ENCODE measurements at regions of chr1 and their contacts with region 1.

Region 1: GRCh38 chr1:165597883-165598675 is 33.0 kb upstream of the MGST3 start:
- DNase-seq: peak; percentile 92 to 99 (median 97)
- H3K4me3 ChIP-seq: peak overlapping the region in 2 of 4 donors; percentile 38 to 66
- H3K27ac ChIP-seq: peak overlapping the region in 3 of 5 donors; percentile 45 to 74 (median 58)
- H3K4me1 ChIP-seq: peaks cover 12 to 13% of the 10 kb centered on the region in 2 donors
- H3K27me3 ChIP-seq: peaks cover 9% of the 10 kb centered on the region
- CTCF ChIP-seq: no peak
- POLR2A ChIP-seq: no peak

Region 2: DNA sequence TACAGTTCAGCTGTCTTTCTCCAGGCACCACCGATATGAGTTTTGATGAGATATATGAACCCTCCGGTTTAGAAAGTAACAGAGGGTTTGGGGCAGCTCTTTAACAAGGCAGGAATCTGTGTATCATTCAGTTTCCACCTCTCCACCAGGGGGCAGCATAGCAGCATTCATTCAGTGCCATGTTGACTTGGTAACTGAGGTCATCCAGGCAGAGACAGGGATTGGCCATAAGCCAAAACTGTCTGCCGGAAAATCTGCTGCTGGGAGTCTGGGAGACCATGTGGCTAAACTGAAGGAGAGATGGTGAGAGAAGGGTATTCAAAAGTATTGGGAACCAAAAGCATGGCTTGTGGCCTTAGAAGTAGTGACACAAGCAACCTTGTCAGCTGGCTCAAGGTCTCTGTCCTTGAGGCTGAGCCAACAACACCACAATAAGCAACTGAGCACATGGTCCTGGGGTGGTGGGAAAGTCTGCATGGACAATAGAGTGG is 340.1 kb before region 1 on chr1:
- intact Hi-C with region 1: loop called in 1 of 2 experiments (anchors 10 kb)
- DNase-seq: peak; percentile 70 to 90 (median 77)
- H3K4me3 ChIP-seq: no peak overlapping the region
- H3K27ac ChIP-seq: no peak overlapping the region
- H3K4me1 ChIP-seq: no peaks in the 10 kb centered on the region
- H3K27me3 ChIP-seq: no peaks in the 10 kb centered on the region
- CTCF ChIP-seq: peak; percentile 46 to 72 (median 65)
- POLR2A ChIP-seq: no peak

Region 3: DNA sequence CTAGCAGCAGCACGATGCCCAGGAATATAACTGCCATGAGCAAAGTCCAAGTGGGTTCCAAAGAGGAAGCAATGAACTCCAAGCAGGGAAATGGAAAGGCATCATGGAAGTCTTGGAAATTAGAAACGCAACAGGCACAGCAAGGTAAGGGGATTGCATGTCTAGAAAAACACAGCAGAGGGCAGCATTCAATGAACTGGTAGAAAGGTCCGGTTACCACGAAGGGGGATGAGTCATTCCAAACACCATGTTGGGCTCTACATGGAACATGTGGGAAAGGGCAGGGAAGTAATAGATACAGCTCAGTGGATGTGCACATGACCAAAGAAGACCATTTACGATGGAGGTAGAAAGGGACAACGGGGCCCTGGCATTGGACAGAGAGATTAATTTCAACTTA is 189.6 kb before region 1 on chr1:
- intact Hi-C with region 1: loop called (anchors 5 kb)
- DNase-seq: peak in 5 of 7 donors; percentile 23 to 50 (median 35)
- H3K4me3 ChIP-seq: no peak overlapping the region
- H3K27ac ChIP-seq: no peak overlapping the region
- H3K4me1 ChIP-seq: no peaks in the 10 kb centered on the region
- H3K27me3 ChIP-seq: peaks cover 1% of the 10 kb centered on the region
- CTCF ChIP-seq: peak in 5 of 6 experiments; percentile 4 to 51 (median 26)
- POLR2A ChIP-seq: no peak

Region 4: DNA sequence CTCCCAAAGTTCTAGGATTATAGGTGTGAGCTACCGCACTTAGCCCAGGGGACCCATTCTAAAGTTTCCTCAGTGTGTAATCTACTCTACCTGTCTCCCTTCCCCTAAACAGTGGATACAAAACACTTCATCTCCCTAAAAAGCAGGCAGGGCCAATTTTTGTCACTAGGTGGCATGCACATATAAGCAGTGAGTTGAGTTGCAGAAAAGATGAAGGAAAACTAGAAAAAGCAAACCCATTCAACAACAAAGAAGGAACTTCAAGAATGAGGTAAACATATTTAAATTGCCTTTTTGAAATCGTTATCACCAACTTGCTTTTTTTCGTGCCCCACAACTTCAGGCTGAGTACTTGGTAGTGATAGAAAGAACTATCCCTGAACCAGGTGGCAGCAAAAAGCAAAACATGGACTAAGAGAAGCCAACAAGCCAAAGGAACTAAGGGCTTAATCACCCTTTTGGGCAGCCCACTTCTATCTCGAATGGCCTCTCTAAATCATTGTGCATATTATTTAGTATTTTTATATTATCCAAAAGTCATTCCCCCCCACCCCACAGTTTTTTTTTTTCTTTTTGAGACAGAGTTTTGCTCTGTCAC is 119.9 kb after region 1 on chr1:
- intact Hi-C with region 1: loop called in 1 of 2 experiments (anchors 10 kb)
- DNase-seq: peak; percentile 36 to 68 (median 51)
- H3K4me3 ChIP-seq: no peak overlapping the region
- H3K27ac ChIP-seq: no peak overlapping the region
- H3K4me1 ChIP-seq: no peaks in the 10 kb centered on the region
- H3K27me3 ChIP-seq: no peaks in the 10 kb centered on the region
- CTCF ChIP-seq: peak; percentile 36 to 79 (median 64)
- POLR2A ChIP-seq: no peak

Region 5: DNA sequence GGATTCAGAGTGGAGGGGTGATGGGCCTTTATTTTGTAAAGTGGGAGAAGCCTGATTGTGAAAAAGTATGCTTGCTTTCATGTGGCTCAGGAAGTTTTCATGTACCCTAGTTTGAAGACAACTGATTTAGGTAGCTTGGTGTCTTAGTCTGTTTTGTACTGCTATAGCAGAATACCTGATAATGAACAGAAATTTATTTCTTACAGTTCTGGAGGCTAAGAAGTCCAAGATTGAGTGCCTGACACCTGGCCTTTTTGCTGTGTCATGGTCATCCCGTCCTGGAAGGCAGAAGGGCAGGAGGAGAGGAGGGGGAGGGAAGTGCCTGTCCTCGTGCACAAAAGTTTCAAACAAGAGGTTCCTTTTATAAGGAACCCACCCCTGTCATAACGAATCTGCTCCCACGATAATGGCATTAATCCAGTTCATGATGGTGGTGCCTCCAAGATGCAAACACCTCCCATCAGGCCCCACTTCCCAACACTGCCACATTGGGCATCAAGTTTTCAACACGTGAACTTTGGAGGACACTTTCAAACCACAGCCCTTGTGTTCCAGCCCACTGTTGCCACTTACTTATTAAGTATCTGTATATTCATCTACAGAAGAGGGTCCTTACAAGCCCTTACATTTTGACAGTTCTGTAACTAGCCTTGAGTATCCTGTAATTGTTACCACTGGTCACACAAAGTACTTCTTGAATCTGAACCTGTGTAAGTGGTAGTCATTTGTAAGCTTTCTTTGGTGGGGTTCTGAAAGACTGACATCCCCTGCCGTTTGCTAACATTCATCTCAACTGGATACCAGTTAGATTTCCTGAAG is 238.8 kb after region 1 on chr1:
- intact Hi-C with region 1: loop called in 1 of 2 experiments (anchors 10 kb)
- DNase-seq: no peak
- H3K4me3 ChIP-seq: no peak overlapping the region
- H3K27ac ChIP-seq: no peak overlapping the region
- H3K4me1 ChIP-seq: peaks cover 4 to 22% of the 10 kb centered on the region in 2 donors
- H3K27me3 ChIP-seq: no peaks in the 10 kb centered on the region
- CTCF ChIP-seq: no peak
- POLR2A ChIP-seq: no peak